Posterior vena cava (tissue), 2 donors: ENCODE measurements at regions of chr2 and their contacts with region 1.

Region 1: GRCh38 chr2:136468799-136469369 is 296.5 kb upstream of the THSD7B start:
- DNase-seq: no peak

Region 2: DNA sequence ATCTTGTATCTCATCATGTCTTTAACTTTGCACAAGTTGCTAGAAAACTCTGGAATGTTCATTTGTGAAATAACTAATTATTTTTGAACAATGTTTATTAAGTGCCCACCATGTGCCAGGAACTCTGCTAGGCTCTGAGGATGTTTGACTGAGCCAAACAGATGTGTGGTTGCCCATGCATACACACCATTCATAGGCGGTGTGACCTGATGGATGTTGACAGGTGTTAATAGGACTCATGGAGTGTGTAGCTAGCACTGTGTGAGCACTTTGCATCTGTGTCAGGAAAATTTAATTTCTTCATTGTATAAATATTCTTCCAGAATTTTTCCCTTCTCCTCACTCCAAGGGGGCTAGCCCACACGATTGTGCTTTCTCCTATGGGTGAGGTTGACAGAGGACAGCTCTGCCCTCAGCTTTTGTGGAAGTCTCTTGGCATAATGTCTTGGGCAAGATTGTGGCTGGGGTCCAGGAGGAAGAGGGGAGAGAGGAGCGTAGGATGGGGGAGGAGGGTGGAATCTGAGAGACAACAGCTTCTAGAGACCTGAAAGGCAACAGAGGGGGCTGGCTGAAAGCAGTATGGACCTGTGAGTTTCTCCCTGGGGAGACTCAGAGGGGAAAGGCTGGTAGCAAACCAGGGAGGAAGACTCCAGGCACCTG is 136.3 kb before region 1 on chr2:
- intact Hi-C with region 1: no loop called
- DNase-seq: no peak

Region 3: GRCh38 chr2:138428710-138429440 is 1960.0 kb after region 1 on chr2:
- intact Hi-C with region 1: loop called in 1 of 2 experiments (anchors 5 kb)
- DNase-seq: no peak